HEK293T (cell line): ENCODE measurements at regions of chr7 and their contacts with region 1.

Region 1: GRCh38 chr7:99551767-99552463 is at the start of gene FAM200A:
- DNase-seq: peak; percentile 94

Region 2: GRCh38 chr7:99504603-99505323 is 47.2 kb before region 1 on chr7 and contains the start of gene ZKSCAN5:
- CTCF ChIA-PET with region 1: no interaction called
- POLR2A ChIA-PET with region 1: interaction called, 12 read pairs
- DNase-seq: peak; percentile 86